Caco-2 (cell line): ENCODE measurements at regions of chr14 and their contacts with region 1.

Region 1: GRCh38 chr14:35404449-35405303 is at the start of gene NFKBIA:
- DNase-seq: peak; percentile 87 to 94
- H3K4me3 ChIP-seq: peak within 1 kb of the TSS; percentile 97
- H3K4me3 Mint-ChIP-seq: peak within 1 kb of the TSS; percentile 86
- H3K27ac Mint-ChIP-seq: peak within 1 kb of the TSS; percentile 95
- H3K4me1 ChIP-seq: peaks cover 22% of the 10 kb centered on the region
- H3K4me1 Mint-ChIP-seq: peaks cover 9% of the 10 kb centered on the region
- H3K27me3 ChIP-seq: no peaks in the 10 kb centered on the region; the same call in 1 of the 2 replicates
- H3K27me3 Mint-ChIP-seq: no peaks in the 10 kb centered on the region
- CTCF ChIP-seq: peak; percentile 19 to 34
- total RNA-seq, gene NFKBIA: 33.4 and 39.9 TPM in 2 replicates

Region 2: DNA sequence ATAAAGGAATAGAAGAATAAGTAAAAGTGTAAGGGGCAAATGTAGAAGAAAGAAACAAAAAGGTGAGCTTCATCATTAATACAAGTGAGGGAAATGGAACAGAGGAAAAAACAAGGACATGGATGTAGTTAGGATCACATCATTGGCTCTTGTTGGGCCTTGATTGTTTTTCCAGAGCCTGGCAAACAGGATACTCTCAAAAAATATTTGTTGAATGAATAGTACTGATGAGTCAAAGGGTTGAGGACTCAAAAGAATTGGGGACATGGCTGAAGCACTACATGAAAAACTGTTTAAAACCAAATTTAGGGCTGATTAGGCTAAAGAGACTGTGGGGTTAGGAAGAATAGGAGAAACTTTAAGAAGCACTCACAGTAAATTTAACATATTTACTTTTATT is 433.3 kb before region 1 on chr14:
- CTCF ChIA-PET with region 1: no interaction called
- POLR2A ChIA-PET with region 1: no interaction called
- intact Hi-C with region 1: no loop called
- DNase-seq: no peak
- H3K4me3 ChIP-seq: no peak overlapping the region
- H3K4me3 Mint-ChIP-seq: no peak overlapping the region
- H3K27ac Mint-ChIP-seq: no peak overlapping the region
- H3K4me1 ChIP-seq: no peaks in the 10 kb centered on the region
- H3K4me1 Mint-ChIP-seq: no peaks in the 10 kb centered on the region
- H3K27me3 ChIP-seq: no peaks in the 10 kb centered on the region
- H3K27me3 Mint-ChIP-seq: no peaks in the 10 kb centered on the region
- CTCF ChIP-seq: no peak

Region 3: GRCh38 chr14:35046048-35046741 is 358.5 kb before region 1 on chr14 and contains the start of gene FAM177A1:
- CTCF ChIA-PET with region 1: no interaction called
- POLR2A ChIA-PET with region 1: interaction called, 4 read pairs
- intact Hi-C with region 1: loop called (anchors 2 kb)
- DNase-seq: peak; percentile 97 to 99
- H3K4me3 ChIP-seq: peak within 1 kb of the TSS; percentile 93
- H3K4me3 Mint-ChIP-seq: peak within 1 kb of the TSS; percentile 90
- H3K27ac Mint-ChIP-seq: peak within 1 kb of the TSS; percentile 98
- H3K4me1 ChIP-seq: peaks cover 21% of the 10 kb centered on the region
- H3K4me1 Mint-ChIP-seq: peaks cover 17% of the 10 kb centered on the region
- H3K27me3 ChIP-seq: no peaks in the 10 kb centered on the region
- H3K27me3 Mint-ChIP-seq: no peaks in the 10 kb centered on the region
- CTCF ChIP-seq: no peak
- total RNA-seq, gene FAM177A1: 73.6 and 82.0 TPM in 2 replicates

Region 4: DNA sequence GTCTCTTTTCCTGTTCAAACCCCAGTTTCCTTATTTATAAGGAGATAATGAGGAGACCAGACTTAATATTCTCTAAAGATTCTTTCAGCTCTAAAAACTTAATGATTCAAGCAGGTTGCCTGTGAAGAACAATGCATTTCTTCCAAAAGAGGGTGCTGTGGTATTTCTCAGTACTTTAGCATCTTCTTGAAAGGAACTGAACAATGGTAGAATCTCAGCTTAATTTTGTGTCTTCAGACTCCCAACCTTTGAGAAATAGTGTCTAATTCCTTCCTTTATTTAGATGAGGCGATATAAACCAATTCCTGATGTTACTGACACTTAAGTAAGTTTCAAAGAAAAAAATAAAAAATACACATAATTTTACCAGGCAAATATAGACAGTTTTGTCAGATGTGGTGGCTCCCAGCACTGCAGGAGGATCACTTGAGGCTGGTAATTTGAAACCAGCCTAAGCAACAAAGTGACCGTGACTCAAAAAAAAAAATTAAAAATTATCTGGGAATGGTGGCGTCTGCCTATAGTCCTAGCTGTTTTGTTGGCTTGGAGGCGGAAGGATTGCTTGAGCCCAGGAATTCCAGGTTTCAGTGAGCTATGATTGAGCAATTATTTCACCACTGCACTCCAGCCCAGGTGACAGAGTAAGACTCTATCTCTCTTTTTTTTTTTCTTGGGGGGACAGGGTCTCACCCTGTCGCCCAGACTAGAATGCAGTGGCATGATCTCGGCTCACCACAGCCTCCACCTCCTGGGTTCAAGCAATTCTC is 189.4 kb before region 1 on chr14:
- CTCF ChIA-PET with region 1: interaction called, 7 read pairs
- POLR2A ChIA-PET with region 1: no interaction called
- intact Hi-C with region 1: loop called (anchors 1 kb)
- DNase-seq: peak in 1 of 2 experiments; percentile 36
- H3K4me3 ChIP-seq: no peak overlapping the region
- H3K4me3 Mint-ChIP-seq: no peak overlapping the region
- H3K27ac Mint-ChIP-seq: no peak overlapping the region
- H3K4me1 ChIP-seq: peaks cover 10% of the 10 kb centered on the region
- H3K4me1 Mint-ChIP-seq: peaks cover 8% of the 10 kb centered on the region
- H3K27me3 ChIP-seq: no peaks in the 10 kb centered on the region
- H3K27me3 Mint-ChIP-seq: no peaks in the 10 kb centered on the region
- CTCF ChIP-seq: peak; percentile 41 to 53

Region 5: DNA sequence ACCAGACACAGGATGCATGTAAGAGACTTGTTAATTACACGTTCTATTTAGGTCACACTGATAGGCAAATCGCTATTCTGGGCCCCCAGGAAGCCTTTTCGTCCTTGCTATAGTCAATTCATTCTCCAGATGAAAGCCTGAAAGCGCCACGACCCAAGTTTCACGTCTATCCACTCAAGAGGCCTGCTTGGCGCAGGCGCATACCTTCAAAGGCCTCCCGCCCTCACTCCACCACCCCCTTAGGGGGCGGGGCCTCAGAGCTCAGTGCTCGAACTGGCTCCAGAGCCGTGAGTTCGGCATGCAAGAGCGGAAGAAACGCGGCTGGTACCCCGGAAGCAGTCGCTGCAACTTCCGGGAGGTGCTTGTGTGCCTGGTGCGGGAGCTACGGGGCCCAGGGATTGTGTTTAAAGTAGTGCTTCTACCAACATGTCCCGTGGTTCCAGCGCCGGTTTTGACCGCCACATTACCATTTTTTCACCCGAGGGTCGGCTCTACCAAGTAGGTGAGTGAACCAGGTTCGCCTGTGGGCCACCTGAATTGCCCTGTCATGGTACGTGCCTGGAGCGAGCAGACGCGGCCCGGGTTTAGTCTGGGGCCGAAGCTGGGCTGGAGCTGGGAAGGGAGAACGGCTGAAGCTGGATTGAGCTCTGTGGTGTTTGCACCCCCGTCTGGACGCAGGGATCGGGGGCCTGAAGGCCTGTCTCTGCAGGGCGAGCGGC is 112.5 kb before region 1 on chr14 and contains the start of gene PSMA6:
- CTCF ChIA-PET with region 1: interaction called, 13 read pairs
- POLR2A ChIA-PET with region 1: interaction called, 47 read pairs
- intact Hi-C with region 1: loop called (anchors 1 kb)
- DNase-seq: peak; percentile 98 to 99
- H3K4me3 ChIP-seq: peak within 1 kb of the TSS; percentile 91
- H3K4me3 Mint-ChIP-seq: peak within 1 kb of the TSS; percentile 92
- H3K27ac Mint-ChIP-seq: peak within 1 kb of the TSS; percentile 97
- H3K4me1 ChIP-seq: peaks cover 8% of the 10 kb centered on the region
- H3K4me1 Mint-ChIP-seq: no peaks in the 10 kb centered on the region
- H3K27me3 ChIP-seq: no peaks in the 10 kb centered on the region
- H3K27me3 Mint-ChIP-seq: no peaks in the 10 kb centered on the region
- CTCF ChIP-seq: no peak
- total RNA-seq, gene PSMA6: 246 and 247 TPM in 2 replicates

Region 6: GRCh38 chr14:35362911-35363374 is 41.7 kb before region 1 on chr14:
- CTCF ChIA-PET with region 1: no interaction called
- POLR2A ChIA-PET with region 1: no interaction called
- intact Hi-C with region 1: no loop called
- DNase-seq: no peak
- H3K4me3 ChIP-seq: no peak overlapping the region
- H3K4me3 Mint-ChIP-seq: no peak overlapping the region
- H3K27ac Mint-ChIP-seq: no peak overlapping the region
- H3K4me1 ChIP-seq: peaks cover 8% of the 10 kb centered on the region
- H3K4me1 Mint-ChIP-seq: no peaks in the 10 kb centered on the region
- H3K27me3 ChIP-seq: no peaks in the 10 kb centered on the region
- H3K27me3 Mint-ChIP-seq: no peaks in the 10 kb centered on the region
- CTCF ChIP-seq: no peak

Region 7: DNA sequence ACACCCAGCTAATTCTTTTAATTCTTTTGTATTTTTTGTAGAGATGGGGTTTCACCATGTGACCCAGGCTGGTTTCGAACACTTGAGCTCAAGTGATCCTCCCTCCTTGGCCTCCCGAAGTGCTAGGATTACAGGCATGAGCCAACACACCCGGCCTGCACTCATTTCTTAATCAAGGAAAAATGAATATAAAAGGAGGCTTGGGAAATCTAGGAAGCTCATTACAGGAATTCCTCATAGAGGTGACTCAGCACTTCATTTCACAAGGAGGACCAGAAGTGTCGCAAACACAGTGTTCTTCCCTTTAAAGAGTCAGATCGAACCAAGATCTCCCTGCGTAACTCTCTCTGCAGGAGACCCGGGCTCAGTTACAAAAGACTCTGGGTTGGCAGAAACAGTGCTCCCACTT is 30.4 kb before region 1 on chr14:
- CTCF ChIA-PET with region 1: no interaction called
- POLR2A ChIA-PET with region 1: interaction called, 4 read pairs
- intact Hi-C with region 1: loop called (anchors 1 kb)
- DNase-seq: peak; percentile 61 to 62
- H3K4me3 ChIP-seq: no peak overlapping the region
- H3K4me3 Mint-ChIP-seq: no peak overlapping the region
- H3K27ac Mint-ChIP-seq: peak overlapping the region; percentile 71
- H3K4me1 ChIP-seq: peaks cover 10% of the 10 kb centered on the region
- H3K4me1 Mint-ChIP-seq: no peaks in the 10 kb centered on the region
- H3K27me3 ChIP-seq: no peaks in the 10 kb centered on the region
- H3K27me3 Mint-ChIP-seq: no peaks in the 10 kb centered on the region
- CTCF ChIP-seq: no peak